ENCODE measurements at regions of chr6 and their contacts with region 1.

Region 1: DNA sequence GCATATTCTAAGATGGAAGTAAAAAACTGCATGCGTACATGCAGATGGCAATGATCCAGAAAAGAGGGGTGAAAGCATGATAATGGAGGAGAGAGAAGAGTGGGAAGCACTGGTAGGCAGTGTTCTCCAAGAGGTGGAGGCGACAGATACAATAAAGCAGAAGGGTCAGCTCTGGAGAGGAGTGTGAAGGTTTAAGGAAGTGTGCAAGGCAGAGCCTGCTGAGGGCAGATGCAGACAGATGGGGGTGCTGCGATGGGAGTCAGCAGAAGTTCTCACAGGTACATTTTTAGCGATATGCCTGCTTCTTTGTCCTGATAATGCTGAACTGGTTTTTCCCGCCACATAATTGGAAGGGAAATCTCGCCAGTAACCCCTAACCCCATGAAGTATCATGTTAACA is 81.1 kb upstream of the C6orf118 start:
- DNase-seq: no peak
- ATAC-seq: no peak
- H3K4me3 ChIP-seq: no peak overlapping the region
- H3K27ac ChIP-seq: no peak overlapping the region
- H3K4me1 ChIP-seq: no peaks in the 10 kb centered on the region
- H3K27me3 ChIP-seq: no peaks in the 10 kb centered on the region
- CTCF ChIP-seq: no peak

Region 2: GRCh38 chr6:164982389-164982788 is 408.1 kb before region 1 on chr6:
- CTCF ChIA-PET with region 1: no interaction called
- POLR2A ChIA-PET with region 1: no interaction called
- intact Hi-C with region 1: loop called (anchors 10 kb)
- DNase-seq: peak; percentile 62
- ATAC-seq: peak; percentile 93
- H3K4me3 ChIP-seq: no peak overlapping the region
- H3K27ac ChIP-seq: peak overlapping the region; percentile 68
- H3K4me1 ChIP-seq: peaks cover 19% of the 10 kb centered on the region
- H3K27me3 ChIP-seq: no peaks in the 10 kb centered on the region
- CTCF ChIP-seq: no peak

Region 3: GRCh38 chr6:165340532-165340931 is 49.9 kb before region 1 on chr6:
- CTCF ChIA-PET with region 1: no interaction called
- POLR2A ChIA-PET with region 1: no interaction called
- intact Hi-C with region 1: no loop called
- DNase-seq: no peak
- ATAC-seq: no peak
- H3K4me3 ChIP-seq: no peak overlapping the region
- H3K27ac ChIP-seq: no peak overlapping the region
- H3K4me1 ChIP-seq: no peaks in the 10 kb centered on the region
- H3K27me3 ChIP-seq: no peaks in the 10 kb centered on the region
- CTCF ChIP-seq: no peak

Measured in PC-3 (cell line).